Esophagus muscularis mucosa (tissue), 4 donors: ENCODE measurements at regions of chr9 and their contacts with region 1.

Region 1: GRCh38 chr9:69672596-69673310 is 582 bp upstream of the APBA1 start:
- DNase-seq: no peak
- H3K4me3 ChIP-seq: peak overlapping the region; percentile 81 to 94 (median 87)
- H3K27ac ChIP-seq: peak overlapping the region; percentile 75 to 83 (median 82)
- H3K4me1 ChIP-seq: peaks cover 15 to 24% (median 23%) of the 10 kb centered on the region in 4 donors
- H3K27me3 ChIP-seq: peaks cover 0 to 3% (median 0%) of the 10 kb centered on the region in 4 donors
- CTCF ChIP-seq: peak; percentile 71 to 91 (median 88)
- EP300 ChIP-seq: no peak
- POLR2A ChIP-seq: no peak

Region 2: DNA sequence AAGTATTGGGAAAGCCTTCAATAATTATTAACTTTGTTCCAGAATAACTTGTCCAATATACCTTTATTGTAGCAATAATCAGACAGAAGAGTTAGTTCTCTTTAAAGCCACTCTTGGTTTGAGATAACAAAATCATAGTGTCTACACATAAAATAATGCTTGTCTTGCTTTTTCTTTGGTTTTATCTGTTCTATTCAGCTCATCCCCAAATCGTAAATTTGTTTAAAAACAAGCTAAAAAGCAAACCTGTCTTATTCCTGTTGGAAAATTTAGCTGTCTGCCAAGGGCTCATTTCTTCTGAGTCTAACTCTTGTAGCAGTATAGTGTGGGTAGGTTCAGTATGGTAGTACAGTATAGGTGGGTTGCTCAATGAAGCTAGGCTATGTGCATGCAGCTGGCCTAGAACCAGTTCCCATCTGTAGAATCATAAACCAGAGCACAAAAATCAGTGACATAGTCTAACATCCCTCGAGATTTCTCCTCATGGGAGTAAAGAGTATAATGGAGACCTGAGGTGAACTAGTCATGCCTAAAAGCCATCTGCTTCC is 17.3 kb after region 1 on chr9:
- intact Hi-C with region 1: no loop called
- DNase-seq: no peak
- H3K4me3 ChIP-seq: no peak overlapping the region
- H3K27ac ChIP-seq: no peak overlapping the region
- H3K4me1 ChIP-seq: no peaks in the 10 kb centered on the region
- H3K27me3 ChIP-seq: no peaks in the 10 kb centered on the region
- CTCF ChIP-seq: no peak
- EP300 ChIP-seq: no peak
- POLR2A ChIP-seq: no peak

Region 3: DNA sequence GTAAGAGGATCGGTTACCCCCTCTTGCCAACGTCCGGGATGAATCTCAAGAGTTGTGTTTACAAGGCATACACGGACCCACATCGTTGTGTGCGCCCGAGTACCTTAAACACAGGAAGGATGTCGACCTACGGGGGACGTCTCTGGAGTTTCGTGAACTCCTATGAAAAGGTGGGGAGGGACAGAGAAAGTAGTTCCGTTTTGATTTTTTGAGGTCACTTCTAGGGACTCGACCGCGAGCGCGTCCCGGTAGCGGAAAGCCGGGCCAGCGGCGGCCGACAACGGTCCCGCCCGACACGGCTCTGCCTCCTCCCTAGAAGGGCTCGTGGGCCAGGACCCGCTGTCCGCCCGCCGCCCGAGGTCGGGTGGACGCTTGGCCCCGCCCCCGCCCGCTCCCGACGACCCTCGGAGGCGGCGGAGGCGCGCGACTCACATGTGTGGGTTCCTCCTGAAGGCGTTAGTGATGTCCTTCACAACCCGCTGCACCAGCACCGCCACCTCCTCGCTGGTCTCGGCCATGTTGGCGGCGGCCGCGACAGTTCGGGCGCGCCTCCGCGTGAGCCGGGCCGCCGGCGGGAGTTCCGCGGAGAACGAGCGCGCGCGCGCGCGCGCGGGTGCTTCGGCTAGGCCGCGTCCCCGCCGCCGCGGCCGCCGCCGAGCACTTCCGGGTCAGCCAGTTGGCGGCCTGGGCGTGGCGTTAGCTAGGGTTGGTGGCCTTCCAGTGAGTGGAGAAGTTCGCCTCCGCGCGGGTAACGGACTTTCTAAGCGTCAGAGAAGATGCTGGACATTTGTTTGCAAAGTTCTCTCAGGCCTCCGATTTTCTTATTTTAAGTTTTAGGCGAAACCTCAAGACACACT is 86.9 kb after region 1 on chr9 and contains the start of gene PTAR1:
- intact Hi-C with region 1: loop called (anchors 2 kb)
- DNase-seq: peak; percentile 98
- H3K4me3 ChIP-seq: peak within 1 kb of the TSS; percentile 68 to 98 (median 92)
- H3K27ac ChIP-seq: peak within 1 kb of the TSS; percentile 87 to 98 (median 96)
- H3K4me1 ChIP-seq: peaks cover 7 to 40% (median 33%) of the 10 kb centered on the region in 4 donors
- H3K27me3 ChIP-seq: no peaks in the 10 kb centered on the region
- CTCF ChIP-seq: peak in 1 of 3 experiments; percentile 20
- EP300 ChIP-seq: no peak
- POLR2A ChIP-seq: peak; percentile 22
- total RNA-seq, gene PTAR1: 47.7 to 68.5 (median 49.7) TPM